ENCODE measurements at regions of chrX and their contacts with region 1.

Region 1: DNA sequence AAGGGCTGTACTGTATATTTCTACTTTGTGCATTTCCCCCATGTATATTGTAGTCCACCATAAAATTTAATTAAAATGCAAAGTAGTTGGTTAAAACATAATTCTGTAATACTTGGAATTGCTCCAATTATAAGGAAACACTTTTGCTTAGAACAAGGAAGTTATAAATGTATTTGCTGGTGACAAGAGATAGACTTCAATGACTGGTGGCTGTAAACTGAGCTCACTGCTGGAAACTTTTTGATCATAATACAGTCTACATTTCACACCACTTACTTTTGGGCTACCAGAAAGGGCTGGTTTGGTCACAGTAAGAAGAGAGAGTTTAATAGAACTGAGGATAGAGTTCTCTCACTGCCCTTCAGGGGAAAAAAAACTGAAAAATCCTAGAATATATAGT is 32.7 kb downstream of the DCAF8L2 start:
- DNase-seq: no peak
- ATAC-seq: no peak
- H3K4me3 ChIP-seq: no peak overlapping the region
- H3K27ac ChIP-seq: no peak overlapping the region
- H3K4me1 ChIP-seq: no peaks in the 10 kb centered on the region
- H3K27me3 ChIP-seq: no peaks in the 10 kb centered on the region
- CTCF ChIP-seq: no peak
- POLR2A ChIP-seq: no peak

Region 2: DNA sequence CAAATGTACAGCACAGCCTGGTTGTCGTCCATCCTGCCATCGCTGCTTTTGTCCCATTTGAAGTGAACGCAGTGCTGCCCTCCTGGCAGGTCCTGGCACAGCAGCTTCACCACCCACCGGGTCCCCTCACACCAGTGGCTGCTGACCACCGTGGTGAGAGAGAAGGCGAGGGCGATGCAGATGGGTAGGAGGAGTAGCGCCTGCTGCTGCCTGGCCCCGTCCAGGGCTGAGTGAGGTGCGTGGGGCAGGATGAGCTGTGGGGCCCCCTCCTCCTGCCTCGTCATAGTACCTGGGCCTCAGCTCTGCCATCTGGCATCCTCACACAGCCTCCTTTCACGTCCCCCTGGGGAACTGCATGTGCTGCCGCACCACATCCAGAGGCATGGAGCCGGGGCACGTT is 30.9 kb before region 1 on chrX:
- intact Hi-C with region 1: loop called in 1 of 10 experiments (anchors 2 kb)
- DNase-seq: no peak
- ATAC-seq: no peak
- H3K4me3 ChIP-seq: no peak overlapping the region
- H3K27ac ChIP-seq: no peak overlapping the region
- H3K4me1 ChIP-seq: no peaks in the 10 kb centered on the region
- H3K27me3 ChIP-seq: no peaks in the 10 kb centered on the region
- CTCF ChIP-seq: no peak
- POLR2A ChIP-seq: no peak

Region 3: GRCh38 chrX:27890611-27891010 is 267.7 kb after region 1 on chrX:
- intact Hi-C with region 1: no loop called
- DNase-seq: no peak
- ATAC-seq: no peak
- H3K4me3 ChIP-seq: no peak overlapping the region
- H3K27ac ChIP-seq: no peak overlapping the region
- H3K4me1 ChIP-seq: no peaks in the 10 kb centered on the region
- H3K27me3 ChIP-seq: no peaks in the 10 kb centered on the region
- CTCF ChIP-seq: no peak
- POLR2A ChIP-seq: no peak

Region 4: DNA sequence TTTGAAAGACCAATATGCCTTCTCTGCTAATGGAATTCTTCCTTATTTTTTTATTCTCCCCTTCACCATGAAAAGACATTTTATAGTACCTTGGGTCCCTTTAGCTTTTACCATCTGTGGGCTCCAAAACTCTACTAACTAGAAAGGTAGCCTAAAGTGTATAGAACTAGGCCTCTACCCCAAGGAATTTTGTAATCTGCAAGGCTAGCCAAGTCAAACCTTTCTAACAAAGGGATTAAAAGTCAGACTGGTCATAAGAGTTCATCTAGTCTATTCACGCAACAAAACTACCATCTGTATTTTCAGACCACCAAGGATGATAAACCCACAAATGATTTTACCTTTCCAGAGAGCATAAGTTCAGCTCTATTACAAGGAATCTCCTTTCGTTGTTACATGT is 547.8 kb after region 1 on chrX:
- intact Hi-C with region 1: no loop called
- DNase-seq: no peak
- ATAC-seq: no peak
- H3K4me3 ChIP-seq: no peak overlapping the region
- H3K27ac ChIP-seq: no peak overlapping the region
- H3K4me1 ChIP-seq: no peaks in the 10 kb centered on the region
- H3K27me3 ChIP-seq: no peaks in the 10 kb centered on the region
- CTCF ChIP-seq: no peak
- POLR2A ChIP-seq: no peak